ENCODE measurements at regions of chr17 and their contacts with region 1.

Region 1: GRCh38 chr17:76365256-76365903 is 11.7 kb upstream of the PRPSAP1 start:
- DNase-seq: no peak
- ATAC-seq: peak; percentile 50
- H3K4me3 ChIP-seq: no peak overlapping the region
- H3K27ac ChIP-seq: no peak overlapping the region
- H3K4me1 ChIP-seq: peaks cover 78% of the 10 kb centered on the region
- H3K27me3 ChIP-seq: no peaks in the 10 kb centered on the region
- CTCF ChIP-seq: peak; percentile 60
- EP300 ChIP-seq: no peak
- POLR2A ChIP-seq: no peak
- RAD21 ChIP-seq: peak; percentile 37; the same call in 1 of the 2 replicates

Region 2: GRCh38 chr17:76353599-76354316 is 11.6 kb before region 1 on chr17 and contains the start of gene PRPSAP1:
- CTCF ChIA-PET with region 1: no interaction called
- POLR2A ChIA-PET with region 1: interaction called, 115 read pairs
- in situ Hi-C with region 1: no loop called
- intact Hi-C with region 1: no loop called
- DNase-seq: peak; percentile 90
- ATAC-seq: peak; percentile 88
- H3K4me3 ChIP-seq: peak within 1 kb of the TSS; percentile 87 to 99 (median 98)
- H3K27ac ChIP-seq: peak within 1 kb of the TSS; percentile 99
- H3K4me1 ChIP-seq: peaks cover 59% of the 10 kb centered on the region
- H3K27me3 ChIP-seq: no peaks in the 10 kb centered on the region; a peak in 1 of 5 replicates
- CTCF ChIP-seq: peak; percentile 51
- EP300 ChIP-seq: peak in 1 of 2 experiments; percentile 3; a peak in 1 of 4 replicates
- POLR2A ChIP-seq: peak; percentile 98 to 100
- RAD21 ChIP-seq: peak; percentile 67
- total RNA-seq, gene PRPSAP1: 91.1 and 115 TPM in 2 replicates

Region 3: DNA sequence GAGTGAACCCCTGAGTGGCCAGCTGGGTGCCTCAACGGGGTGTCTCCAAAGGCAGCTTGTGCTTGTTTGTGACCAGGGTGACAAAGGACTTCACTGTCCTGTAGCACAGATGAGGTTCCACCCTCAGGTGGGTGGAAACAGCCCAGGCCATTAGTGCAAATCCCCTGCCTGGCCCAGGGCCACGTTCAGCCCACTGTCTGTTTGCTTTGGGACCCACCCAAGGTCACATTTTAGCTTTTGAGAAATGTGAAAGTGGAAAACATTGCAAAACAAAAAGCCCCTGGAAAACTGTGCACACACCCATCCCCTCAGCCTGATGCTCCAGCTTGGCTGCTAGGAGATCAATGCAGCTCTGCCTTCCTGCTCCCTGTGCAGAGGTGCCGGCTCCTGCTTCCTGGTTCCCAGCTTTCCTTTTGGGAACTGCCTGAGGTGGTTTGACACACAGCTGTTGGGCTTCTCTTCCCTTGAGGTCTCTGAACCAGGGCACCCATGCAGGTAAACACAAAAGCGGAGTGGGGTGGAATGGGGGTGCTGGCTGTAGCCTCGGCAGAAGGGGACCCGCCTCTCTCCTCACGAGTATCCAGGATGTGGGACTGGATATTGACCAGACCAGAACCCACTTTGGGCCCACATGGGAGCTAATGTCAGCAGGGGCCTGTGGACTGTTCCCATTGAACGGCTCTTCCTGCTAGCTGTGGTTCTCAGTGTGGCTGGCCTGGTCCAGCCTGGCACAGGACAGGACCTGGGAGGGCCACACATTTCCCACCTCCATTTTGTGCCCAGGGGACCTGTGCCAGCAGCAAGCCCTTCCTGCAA is 11.1 kb after region 1 on chr17:
- CTCF ChIA-PET with region 1: no interaction called
- POLR2A ChIA-PET with region 1: interaction called, 1,379 read pairs
- in situ Hi-C with region 1: no loop called
- intact Hi-C with region 1: loop called (anchors 1 kb)
- DNase-seq: peak; percentile 100
- ATAC-seq: peak; percentile 88
- H3K4me3 ChIP-seq: peak overlapping the region; percentile 63 to 82 (median 66)
- H3K27ac ChIP-seq: peak overlapping the region; percentile 90
- H3K4me1 ChIP-seq: peaks cover 97% of the 10 kb centered on the region
- H3K27me3 ChIP-seq: no peaks in the 10 kb centered on the region
- CTCF ChIP-seq: peak; percentile 35; the same call in 1 of the 2 replicates
- EP300 ChIP-seq: peak; percentile 83 to 97; a peak in 3 of 4 replicates
- POLR2A ChIP-seq: peak in 1 of 2 experiments; percentile 83; a peak in 2 of 4 replicates
- RAD21 ChIP-seq: peak; percentile 53

Measured in HepG2 (cell line).